Activated T-helper 1 cell treated with anti-CD3 and anti-CD28 coated beads, Interleukin-12 subunit alpha, Interleukin-12 subunit beta, Interleukin-2, Interleukin-4 antibody, amounts not matched to agents 30 ng/mL and 10 ng/mL and 1 ng/mL, durations not matched to agents 14 hours and 24 hours and 36 hours (primary cell): ENCODE measurements at regions of chr12 and their contacts with region 1.

Region 1: DNA sequence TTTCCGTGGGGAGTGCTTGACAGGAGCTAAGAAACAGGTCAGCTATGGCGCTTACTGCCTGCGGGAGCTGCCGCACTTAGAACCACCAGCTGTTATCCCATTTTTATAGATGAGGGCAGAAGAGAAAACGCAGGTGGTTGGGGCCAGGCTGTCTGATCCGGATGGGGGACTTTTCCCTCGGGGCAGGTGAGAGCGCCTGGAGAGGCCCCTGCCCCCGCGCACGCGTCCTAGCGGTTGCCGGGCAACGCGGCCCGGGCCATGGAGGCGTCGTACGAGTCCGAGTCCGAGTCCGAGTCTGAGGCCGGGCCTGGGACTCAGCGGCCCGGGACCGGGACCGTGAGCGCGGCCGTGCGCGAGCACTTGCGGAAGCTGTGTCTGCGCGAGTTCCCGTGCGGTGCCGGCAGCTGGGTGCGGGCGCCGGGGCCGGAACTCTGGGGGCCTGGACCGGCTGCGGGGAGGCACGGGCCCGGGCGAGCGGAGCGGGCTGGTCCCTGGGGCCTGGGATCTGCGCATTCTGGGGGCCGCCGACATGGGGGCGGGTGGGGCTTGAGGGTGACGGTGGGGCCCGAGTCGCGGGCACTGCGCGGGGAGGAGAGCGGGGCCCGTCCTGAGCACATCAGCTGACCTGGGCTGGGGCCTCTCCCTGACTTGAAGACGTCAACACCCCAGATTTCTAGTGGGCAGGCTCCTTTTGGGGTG is at the start of gene LRRC43:
- DNase-seq: peak; percentile 19
- H3K4me3 Mint-ChIP-seq: peak within 1 kb of the TSS; percentile 76
- H3K27ac Mint-ChIP-seq: no peak within 1 kb of the TSS
- H3K4me1 Mint-ChIP-seq: peaks cover 5% of the 10 kb centered on the region
- H3K27me3 Mint-ChIP-seq: peaks cover 16% of the 10 kb centered on the region
- total RNA-seq, gene LRRC43: 0.26 TPM in 1 of 2 replicates, not detected in the other

Region 2: DNA sequence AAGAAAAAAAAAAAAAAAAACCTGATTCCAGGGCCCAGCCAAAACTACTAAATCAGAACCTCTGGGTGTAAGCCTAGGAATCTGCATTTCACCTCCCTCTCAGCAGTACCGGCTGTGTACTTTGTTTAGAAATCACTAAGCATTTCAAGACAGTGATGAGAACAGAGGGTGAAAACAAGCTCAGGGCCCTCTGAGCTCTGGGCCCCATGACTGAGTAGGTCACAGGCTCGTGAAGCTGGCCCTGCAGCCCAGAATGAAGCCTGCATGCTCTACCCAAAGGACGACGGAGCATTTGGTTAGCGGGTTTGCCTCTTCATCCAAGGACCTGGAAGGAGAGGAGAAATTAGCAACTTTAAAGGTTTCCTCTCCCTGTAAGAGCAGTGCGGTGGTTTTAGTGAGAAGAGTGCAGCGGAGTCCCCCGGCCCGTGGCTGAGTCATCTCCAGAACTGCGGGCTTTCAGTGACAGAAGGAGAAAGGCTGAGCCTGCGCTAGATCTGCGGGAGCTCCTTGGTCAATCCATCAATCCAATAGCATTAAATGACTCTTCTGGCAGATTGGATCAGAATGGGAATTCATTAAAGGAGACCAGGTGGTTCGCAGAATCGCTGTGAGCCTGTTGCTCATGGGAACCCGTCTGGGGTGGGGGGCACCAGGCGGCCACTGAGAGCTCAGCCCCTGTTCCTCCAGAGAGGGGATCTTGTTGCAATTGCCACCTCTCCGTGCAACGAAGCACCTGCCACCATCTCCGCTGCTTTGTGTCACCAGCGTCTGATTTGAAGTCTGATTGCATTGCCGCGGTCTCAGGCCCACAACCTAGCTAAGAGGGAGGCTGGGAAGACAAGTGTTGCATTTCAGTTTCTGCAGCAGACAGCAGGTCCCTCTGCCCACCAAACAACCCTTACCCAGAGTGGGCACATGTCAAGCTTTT is 16.4 kb before region 1 on chr12:
- intact Hi-C with region 1: loop called (anchors 2 kb)
- DNase-seq: peak; percentile 48
- H3K4me3 Mint-ChIP-seq: no peak overlapping the region
- H3K27ac Mint-ChIP-seq: no peak overlapping the region
- H3K4me1 Mint-ChIP-seq: peaks cover 34% of the 10 kb centered on the region
- H3K27me3 Mint-ChIP-seq: no peaks in the 10 kb centered on the region

Region 3: DNA sequence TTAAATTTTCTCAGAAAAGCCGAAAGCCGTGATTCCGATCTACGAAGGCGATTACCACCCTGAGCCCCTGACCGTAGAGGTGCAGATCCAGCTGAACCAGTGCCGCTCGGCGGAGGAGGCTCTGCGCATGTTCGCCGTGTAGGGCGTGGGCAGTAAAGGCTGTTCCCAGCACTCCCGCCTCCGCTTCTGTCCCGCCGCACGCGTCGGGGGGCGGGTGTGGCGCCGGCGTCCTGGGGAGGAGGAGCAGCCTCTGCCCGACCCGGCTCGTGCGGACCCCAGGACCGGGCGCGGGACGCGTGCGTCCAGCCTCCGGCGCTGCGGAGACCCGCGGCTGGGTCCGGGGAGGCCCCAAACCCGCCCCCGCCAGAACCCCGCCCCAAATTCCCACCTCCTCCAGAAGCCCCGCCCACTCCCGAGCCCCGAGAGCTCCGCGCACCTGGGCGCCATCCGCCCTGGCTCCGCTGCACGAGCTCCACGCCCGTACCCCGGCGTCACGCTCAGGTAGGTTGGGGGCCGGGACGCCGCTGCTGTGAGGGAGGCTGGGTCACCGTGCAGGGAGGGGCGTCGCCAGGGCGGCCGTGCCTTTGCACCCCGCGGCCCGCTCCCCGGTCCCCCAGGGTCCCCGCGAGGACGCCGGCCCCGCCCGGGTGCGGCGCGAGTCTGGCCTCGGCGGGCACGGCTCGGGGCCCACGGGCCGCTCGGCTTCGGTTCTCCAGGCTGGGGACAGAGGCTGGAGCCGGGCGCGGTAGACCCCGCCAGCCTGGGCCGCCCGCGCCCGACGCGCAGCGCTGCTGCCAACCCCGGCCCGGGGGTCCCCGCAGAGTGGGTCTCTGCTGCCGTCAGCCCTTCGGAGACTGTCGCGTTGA is 20.5 kb after region 1 on chr12 and contains the start of gene B3GNT4:
- intact Hi-C with region 1: no loop called
- DNase-seq: peak; percentile 45
- H3K4me3 Mint-ChIP-seq: peak within 1 kb of the TSS; percentile 82
- H3K27ac Mint-ChIP-seq: peak within 1 kb of the TSS; percentile 40
- H3K4me1 Mint-ChIP-seq: no peaks in the 10 kb centered on the region
- H3K27me3 Mint-ChIP-seq: peaks cover 23% of the 10 kb centered on the region
- total RNA-seq, gene B3GNT4: 0.29 TPM in 2 replicates